Body of pancreas (tissue), 4 donors: ENCODE measurements at regions of chr15 and their contacts with region 1.

Region 1: DNA sequence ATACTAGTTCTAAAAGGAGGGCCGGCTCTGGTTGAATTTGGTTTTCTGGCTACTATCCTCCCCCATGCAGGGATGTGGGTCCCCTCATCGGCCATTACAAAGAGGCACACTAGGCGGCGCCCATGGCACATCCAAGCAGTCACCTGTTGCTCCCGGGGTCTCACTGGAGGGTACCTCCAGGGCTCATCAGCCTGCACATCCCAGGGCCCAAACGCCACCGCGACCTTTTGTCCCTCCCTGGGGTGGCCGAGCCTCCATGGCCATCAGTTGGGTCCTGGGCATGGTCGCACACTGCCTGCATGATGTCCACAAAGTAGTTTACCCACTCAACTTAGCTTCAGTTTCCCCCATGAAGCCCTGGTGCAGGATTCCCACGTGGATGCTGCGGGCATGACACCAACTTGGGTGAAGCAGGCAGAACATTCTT is 28.3 kb downstream of the IDH3A start:
- DNase-seq: peak; percentile 30 to 70 (median 48)
- ATAC-seq: peak; percentile 30
- H3K4me3 ChIP-seq: no peak overlapping the region
- H3K27ac ChIP-seq: no peak overlapping the region
- H3K4me1 ChIP-seq: no peaks in the 10 kb centered on the region
- H3K27me3 ChIP-seq: no peaks in the 10 kb centered on the region
- CTCF ChIP-seq: peak; percentile 30 to 80 (median 56)
- POLR2A ChIP-seq: no peak

Region 2: DNA sequence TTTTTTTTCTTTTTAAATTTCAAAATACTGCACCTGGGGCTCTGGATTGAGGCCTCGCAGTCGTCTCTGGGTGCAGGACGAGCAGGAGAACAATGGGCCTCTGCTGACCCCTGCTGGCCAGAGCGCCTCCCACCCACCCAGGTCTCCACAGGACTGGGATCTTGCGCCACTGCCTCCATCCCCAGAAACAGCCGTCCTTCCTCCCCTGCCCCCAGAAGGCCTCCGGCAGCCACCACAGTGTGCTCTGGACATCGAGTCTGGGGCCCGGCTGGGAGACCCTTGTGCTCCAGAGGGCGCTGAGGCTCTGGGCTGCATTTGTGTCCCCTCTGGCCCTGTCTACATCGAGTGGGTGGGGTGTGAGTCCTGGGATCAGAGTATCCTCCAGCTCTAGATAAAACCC is 63.5 kb after region 1 on chr15:
- intact Hi-C with region 1: loop called (anchors 5 kb)
- DNase-seq: peak; percentile 89 to 94 (median 91)
- ATAC-seq: peak; percentile 95
- H3K4me3 ChIP-seq: no peak overlapping the region
- H3K27ac ChIP-seq: no peak overlapping the region
- H3K4me1 ChIP-seq: peaks cover 7% of the 10 kb centered on the region
- H3K27me3 ChIP-seq: no peaks in the 10 kb centered on the region
- CTCF ChIP-seq: peak; percentile 73 to 91 (median 89)
- POLR2A ChIP-seq: no peak

Region 3: DNA sequence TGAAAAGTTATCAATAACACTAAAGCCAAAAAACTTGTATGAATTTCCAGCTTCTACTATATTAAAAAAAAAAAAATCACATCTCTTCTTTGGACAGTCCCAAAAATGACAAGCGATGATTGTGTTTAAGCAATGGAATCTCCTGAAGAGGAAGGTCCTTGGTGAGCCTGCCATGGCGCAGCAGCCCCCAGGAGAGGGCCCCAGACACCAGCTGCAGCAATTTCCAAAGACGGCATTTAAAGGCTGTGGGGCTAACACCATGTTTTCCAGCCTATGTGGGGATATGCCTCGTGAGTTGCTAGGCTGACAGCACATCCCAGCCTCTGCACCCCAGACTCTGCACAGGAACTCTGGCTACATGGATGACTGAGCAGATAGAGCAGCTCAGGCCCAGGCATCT is 107.3 kb after region 1 on chr15:
- intact Hi-C with region 1: no loop called
- DNase-seq: no peak
- ATAC-seq: no peak
- H3K4me3 ChIP-seq: no peak overlapping the region
- H3K27ac ChIP-seq: no peak overlapping the region
- H3K4me1 ChIP-seq: no peaks in the 10 kb centered on the region
- H3K27me3 ChIP-seq: no peaks in the 10 kb centered on the region
- CTCF ChIP-seq: no peak
- POLR2A ChIP-seq: no peak